ENCODE measurements at regions of chr11 and their contacts with region 1.

Region 1: GRCh38 chr11:3412837-3413236 is 33.9 kb upstream of the ZNF195 start:
- DNase-seq: no peak
- ATAC-seq: no peak
- H3K4me3 ChIP-seq: no peak overlapping the region
- H3K27ac ChIP-seq: no peak overlapping the region
- H3K4me1 ChIP-seq: no peaks in the 10 kb centered on the region
- H3K27me3 ChIP-seq: no peaks in the 10 kb centered on the region
- CTCF ChIP-seq: no peak

Region 2: DNA sequence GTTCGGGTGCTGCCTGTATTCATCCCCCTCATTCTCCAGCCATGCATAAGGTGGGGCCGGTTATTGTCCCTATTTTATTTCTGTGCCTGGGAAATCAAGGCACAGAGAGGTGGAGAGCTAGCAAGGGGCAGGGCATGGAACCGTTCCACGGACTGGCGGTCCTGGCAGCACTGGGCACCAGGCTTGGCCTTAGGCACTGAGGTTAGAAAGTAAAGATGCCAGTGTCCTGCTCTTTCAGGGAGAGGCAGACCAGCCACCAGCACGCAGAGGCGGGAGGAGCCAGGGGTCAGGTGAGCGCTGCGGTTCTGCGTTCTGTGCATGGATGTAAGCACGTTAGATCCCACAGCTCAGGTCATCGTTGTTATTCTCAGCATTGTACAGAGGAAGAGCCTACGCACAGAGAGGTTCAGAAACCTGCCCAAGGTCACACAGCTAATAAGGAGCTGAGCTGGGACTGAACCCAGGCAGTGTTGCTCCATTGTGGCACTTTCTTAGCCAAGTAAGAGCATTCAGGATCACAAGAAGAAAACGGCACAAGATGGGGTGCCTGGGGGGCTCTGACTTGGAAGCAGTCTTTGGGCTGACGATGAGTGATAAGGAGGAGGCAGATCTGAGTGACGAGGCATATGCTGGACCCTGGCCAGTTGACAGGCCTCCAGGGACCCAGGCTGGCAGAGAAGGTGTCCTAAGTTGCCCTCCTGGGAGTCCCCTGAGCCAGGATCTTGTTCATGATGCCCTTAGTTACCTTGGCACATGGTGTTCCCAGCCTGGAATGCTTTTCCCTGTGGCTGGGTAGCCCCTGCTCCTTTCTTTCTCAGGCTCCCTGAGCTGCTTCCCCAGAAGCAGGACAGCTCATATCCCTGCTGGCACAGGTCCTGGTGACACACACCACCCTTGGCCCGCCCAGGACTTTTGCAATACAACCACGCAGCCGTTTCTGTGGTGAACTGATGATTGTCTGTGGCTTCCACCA is 288.8 kb before region 1 on chr11:
- intact Hi-C with region 1: no loop called
- DNase-seq: peak in 4 of 6 donors; percentile 38 to 56 (median 44)
- ATAC-seq: peak in 3 of 4 donors; percentile 46 to 71 (median 57)
- H3K4me3 ChIP-seq: no peak overlapping the region
- H3K27ac ChIP-seq: no peak overlapping the region
- H3K4me1 ChIP-seq: no peaks in the 10 kb centered on the region
- H3K27me3 ChIP-seq: no peaks in the 10 kb centered on the region
- CTCF ChIP-seq: no peak

Region 3: GRCh38 chr11:3195251-3196160 is 217.3 kb before region 1 on chr11:
- intact Hi-C with region 1: no loop called
- DNase-seq: peak in 2 of 6 donors; percentile 13 to 51
- ATAC-seq: peak in 2 of 4 donors; percentile 32 to 39
- H3K4me3 ChIP-seq: no peak overlapping the region
- H3K27ac ChIP-seq: no peak overlapping the region
- H3K4me1 ChIP-seq: no peaks in the 10 kb centered on the region
- H3K27me3 ChIP-seq: no peaks in the 10 kb centered on the region
- CTCF ChIP-seq: no peak

Region 4: GRCh38 chr11:3341298-3341697 is 71.5 kb before region 1 on chr11:
- intact Hi-C with region 1: loop called in 1 of 3 experiments (anchors 10 kb)
- DNase-seq: peak; percentile 56 to 90 (median 69)
- ATAC-seq: peak; percentile 49 to 77 (median 76)
- H3K4me3 ChIP-seq: no peak overlapping the region
- H3K27ac ChIP-seq: no peak overlapping the region
- H3K4me1 ChIP-seq: peaks cover 5 to 15% (median 9%) of the 10 kb centered on the region in 3 donors
- H3K27me3 ChIP-seq: no peaks in the 10 kb centered on the region
- CTCF ChIP-seq: peak; percentile 46 to 78 (median 61)

Region 5: DNA sequence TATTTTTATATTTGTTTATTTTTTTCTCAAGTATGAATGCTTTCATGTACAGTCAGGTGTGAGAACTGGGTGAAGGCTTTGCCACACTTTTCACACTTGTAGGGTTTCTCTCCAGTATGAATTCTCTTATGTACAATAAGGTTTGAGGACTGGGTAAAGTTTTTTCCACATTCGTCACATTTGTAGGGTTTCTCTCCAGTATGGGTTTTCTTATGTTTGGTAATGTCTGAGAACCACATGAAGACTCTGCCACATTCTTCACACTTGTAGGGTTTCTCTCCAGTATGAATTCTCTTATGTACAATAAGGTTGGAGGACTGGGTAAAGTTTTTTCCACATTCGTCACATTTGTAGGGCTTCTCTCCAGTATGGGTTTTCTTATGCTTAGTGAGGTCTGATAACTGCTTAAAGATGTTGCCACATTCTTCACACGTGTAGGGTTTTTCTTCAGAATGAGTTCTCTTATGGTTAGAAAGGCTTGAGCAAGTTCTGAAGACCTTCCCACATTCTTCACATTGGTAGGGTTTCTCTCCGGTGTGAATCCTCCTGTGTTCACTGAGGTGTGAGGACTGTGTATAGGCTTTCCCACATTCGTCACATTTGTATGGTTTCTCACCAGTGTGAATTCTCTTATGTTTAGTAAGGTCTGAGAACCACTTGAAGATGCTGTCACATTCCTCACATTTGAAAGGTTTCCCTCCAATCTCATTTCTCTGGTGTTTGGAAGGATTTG is 53.6 kb before region 1 on chr11:
- intact Hi-C with region 1: loop called in 1 of 3 experiments (anchors 10 kb)
- DNase-seq: no peak
- ATAC-seq: no peak
- H3K4me3 ChIP-seq: no peak overlapping the region
- H3K27ac ChIP-seq: no peak overlapping the region
- H3K4me1 ChIP-seq: no peaks in the 10 kb centered on the region
- H3K27me3 ChIP-seq: no peaks in the 10 kb centered on the region
- CTCF ChIP-seq: no peak

Region 6: GRCh38 chr11:3674189-3674588 is 261.4 kb after region 1 on chr11:
- intact Hi-C with region 1: no loop called
- DNase-seq: no peak
- ATAC-seq: no peak
- H3K4me3 ChIP-seq: no peak overlapping the region
- H3K27ac ChIP-seq: no peak overlapping the region
- H3K4me1 ChIP-seq: no peaks in the 10 kb centered on the region
- H3K27me3 ChIP-seq: no peaks in the 10 kb centered on the region
- CTCF ChIP-seq: no peak

Region 7: GRCh38 chr11:3709977-3710376 is 297.1 kb after region 1 on chr11:
- intact Hi-C with region 1: no loop called
- DNase-seq: no peak
- ATAC-seq: no peak
- H3K4me3 ChIP-seq: no peak overlapping the region
- H3K27ac ChIP-seq: no peak overlapping the region
- H3K4me1 ChIP-seq: no peaks in the 10 kb centered on the region
- H3K27me3 ChIP-seq: no peaks in the 10 kb centered on the region
- CTCF ChIP-seq: no peak